ENCODE measurements at regions of chr11 and their contacts with region 1.

Region 1: DNA sequence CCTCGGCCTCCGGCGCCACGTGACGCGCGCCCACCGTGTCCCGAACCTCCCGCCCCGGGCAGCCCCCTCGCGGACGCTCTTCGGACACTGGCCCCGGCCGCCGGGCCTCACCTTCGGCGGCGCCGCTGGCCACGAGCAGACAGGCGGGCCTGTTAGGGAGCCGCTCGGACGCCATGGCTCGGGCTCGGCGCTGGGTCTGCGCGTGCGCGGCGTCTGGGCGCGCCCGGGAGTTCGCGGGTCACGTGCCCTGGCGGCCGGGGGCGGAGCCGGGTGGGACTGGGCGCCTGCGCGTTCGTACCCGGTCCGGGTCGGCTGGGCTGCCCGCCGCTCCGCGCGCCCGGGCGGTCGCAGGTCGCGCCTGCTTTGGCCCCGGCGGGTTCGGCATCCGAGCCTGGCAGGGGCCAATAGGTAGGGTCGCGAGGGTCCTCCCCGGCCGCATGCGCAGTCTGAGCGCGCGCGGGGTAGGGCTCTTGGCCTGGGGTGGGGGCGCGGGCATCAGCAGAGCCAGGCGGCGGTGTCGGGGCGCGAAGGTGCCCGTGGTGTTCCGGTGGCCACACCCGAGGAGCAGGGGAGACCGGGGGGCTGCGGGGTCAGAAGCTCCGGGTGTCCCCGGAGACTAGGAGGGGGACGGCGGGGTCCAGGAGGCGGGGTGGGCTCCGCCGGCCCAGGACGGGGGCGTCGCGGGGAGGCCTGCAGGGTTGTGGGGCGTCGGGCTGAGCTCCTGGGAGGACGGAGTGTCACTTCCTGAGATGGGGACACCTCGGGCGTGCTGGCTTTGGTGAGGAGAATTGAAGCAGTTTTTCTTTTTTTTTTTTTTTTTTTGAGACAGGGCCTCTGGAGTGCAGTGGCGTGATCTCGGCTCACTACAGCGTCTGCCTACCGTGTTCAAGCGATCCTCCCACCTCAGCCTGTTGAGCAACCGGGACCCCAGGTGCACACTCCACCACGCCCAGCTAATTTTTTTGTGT is at the start of gene GATD1:
- DNase-seq: peak; percentile 94
- H3K4me3 Mint-ChIP-seq: peak within 1 kb of the TSS; percentile 81
- H3K27ac Mint-ChIP-seq: peak within 1 kb of the TSS; percentile 79
- H3K4me1 Mint-ChIP-seq: peaks cover 35% of the 10 kb centered on the region
- H3K27me3 Mint-ChIP-seq: no peaks in the 10 kb centered on the region
- total RNA-seq, gene GATD1: 48.6 to 52.9 TPM

Region 2: GRCh38 chr11:747158-748006 is 30.2 kb before region 1 on chr11 and contains the start of gene TALDO1:
- CTCF ChIA-PET with region 1: no interaction called
- POLR2A ChIA-PET with region 1: interaction called, 14 read pairs
- DNase-seq: peak; percentile 89
- H3K4me3 Mint-ChIP-seq: peak within 1 kb of the TSS; percentile 82
- H3K27ac Mint-ChIP-seq: peak within 1 kb of the TSS; percentile 77
- H3K4me1 Mint-ChIP-seq: peaks cover 25% of the 10 kb centered on the region
- H3K27me3 Mint-ChIP-seq: no peaks in the 10 kb centered on the region
- total RNA-seq, gene TALDO1: 215 to 224 TPM

Region 3: DNA sequence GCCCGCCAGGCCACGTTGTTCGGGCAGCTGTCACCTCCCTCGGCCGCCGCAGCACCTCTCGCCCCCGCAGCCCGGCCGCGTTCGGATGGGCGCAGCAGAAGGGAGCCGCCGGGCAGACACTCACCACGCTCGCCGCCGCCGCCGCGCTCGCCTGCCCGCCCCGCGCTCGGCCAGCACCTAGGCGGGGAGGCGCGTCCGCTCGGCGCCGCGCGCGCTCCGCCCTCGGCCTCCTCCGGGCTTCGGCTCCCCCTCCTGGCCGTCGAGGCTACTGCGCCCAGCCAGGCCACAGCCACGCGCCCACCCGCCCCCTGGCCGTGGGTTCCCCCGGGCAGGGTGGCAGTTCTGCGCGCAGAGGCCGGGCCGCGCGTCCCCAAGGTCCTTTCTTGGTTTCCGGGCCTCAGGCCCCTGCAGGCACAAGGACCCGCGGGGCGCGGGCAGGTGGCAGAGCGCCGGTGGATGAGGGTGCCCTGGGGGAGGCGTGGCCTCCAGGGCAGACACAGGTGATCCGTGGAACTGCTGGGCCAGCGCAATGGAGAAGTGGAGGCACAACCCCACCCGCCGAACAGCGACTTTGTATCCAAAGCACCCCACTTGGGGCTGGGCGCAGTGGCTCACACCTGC is 20.6 kb after region 1 on chr11 and contains the start of gene SLC25A22:
- CTCF ChIA-PET with region 1: no interaction called
- POLR2A ChIA-PET with region 1: interaction called, 35 read pairs
- DNase-seq: peak; percentile 87
- H3K4me3 Mint-ChIP-seq: peak within 1 kb of the TSS; percentile 93
- H3K27ac Mint-ChIP-seq: peak within 1 kb of the TSS; percentile 89
- H3K4me1 Mint-ChIP-seq: peaks cover 37% of the 10 kb centered on the region
- H3K27me3 Mint-ChIP-seq: no peaks in the 10 kb centered on the region
- total RNA-seq, gene SLC25A22: 35.7 to 38.3 TPM

Region 4: GRCh38 chr11:803770-804598 is 26.4 kb after region 1 on chr11:
- CTCF ChIA-PET with region 1: interaction called, 4 read pairs
- POLR2A ChIA-PET with region 1: interaction called, 12 read pairs
- DNase-seq: no peak
- H3K4me3 Mint-ChIP-seq: peak overlapping the region; percentile 82
- H3K27ac Mint-ChIP-seq: peak overlapping the region; percentile 78
- H3K4me1 Mint-ChIP-seq: peaks cover 40% of the 10 kb centered on the region
- H3K27me3 Mint-ChIP-seq: no peaks in the 10 kb centered on the region

Region 5: DNA sequence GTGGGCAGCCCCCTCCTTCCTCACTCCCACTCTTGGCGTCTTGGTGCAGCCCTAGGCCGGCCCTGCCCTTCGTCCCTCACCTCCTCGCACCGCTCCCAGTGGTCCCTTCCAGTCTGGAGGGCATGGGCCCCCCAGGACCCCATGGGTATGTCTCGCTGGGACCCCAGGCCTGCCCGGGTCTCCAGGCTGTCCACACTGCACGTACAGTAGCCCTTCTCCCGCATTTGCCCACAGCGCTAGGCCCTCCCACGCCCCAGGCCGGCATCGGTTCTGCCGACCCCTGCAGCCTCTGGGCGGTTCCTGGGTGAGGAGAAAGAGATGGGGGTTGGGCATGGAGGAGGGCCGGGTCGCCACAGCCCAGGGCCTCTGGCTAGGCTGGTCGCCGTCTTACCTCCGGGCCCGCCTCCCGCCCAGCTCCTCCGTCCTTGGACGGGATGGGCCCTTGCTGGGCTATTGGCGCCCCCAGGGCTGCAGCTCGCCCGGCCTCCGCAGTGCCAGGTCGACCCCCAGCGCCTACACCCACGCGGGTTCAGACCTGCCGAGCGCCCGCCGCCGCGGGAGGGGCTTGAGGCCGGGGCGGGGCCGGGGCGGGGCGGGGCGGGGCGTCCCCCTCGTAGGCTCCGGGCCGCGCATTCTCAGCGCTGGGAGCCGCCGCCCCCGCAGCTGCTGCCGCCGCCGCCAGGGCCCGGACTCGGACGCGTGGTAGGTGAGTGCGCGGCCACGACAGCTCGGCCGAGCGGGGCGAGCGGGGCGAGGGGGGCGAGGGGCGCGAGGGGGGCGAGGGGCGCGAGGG is 54.9 kb after region 1 on chr11 and contains the start of gene CD151:
- CTCF ChIA-PET with region 1: no interaction called
- POLR2A ChIA-PET with region 1: no interaction called
- DNase-seq: peak; percentile 61
- H3K4me3 Mint-ChIP-seq: peak within 1 kb of the TSS; percentile 47
- H3K27ac Mint-ChIP-seq: no peak within 1 kb of the TSS
- H3K4me1 Mint-ChIP-seq: peaks cover 36% of the 10 kb centered on the region
- H3K27me3 Mint-ChIP-seq: peaks cover 37% of the 10 kb centered on the region
- total RNA-seq, gene CD151: 28.0 to 28.6 TPM

Region 6: DNA sequence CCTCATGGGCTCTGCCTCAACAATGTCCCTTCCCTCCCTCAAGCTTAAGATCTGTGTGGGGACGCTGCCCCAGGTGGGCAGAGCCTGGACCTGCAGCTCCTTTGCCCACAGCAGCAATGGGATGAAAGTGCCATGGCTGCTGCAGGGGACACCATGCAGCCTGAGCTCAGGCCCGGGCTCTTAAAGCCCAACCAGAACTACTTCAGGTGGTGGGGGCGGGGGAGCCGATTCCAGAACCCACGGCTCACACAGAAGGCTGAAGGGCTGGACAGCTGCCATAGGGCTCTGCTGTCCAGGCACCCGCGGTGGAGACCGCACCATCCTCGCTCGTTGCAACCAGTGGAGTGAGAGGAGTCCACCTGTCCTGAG is 120.6 kb after region 1 on chr11:
- CTCF ChIA-PET with region 1: no interaction called
- POLR2A ChIA-PET with region 1: no interaction called
- DNase-seq: no peak
- H3K4me3 Mint-ChIP-seq: no peak overlapping the region
- H3K27ac Mint-ChIP-seq: no peak overlapping the region
- H3K4me1 Mint-ChIP-seq: no peaks in the 10 kb centered on the region
- H3K27me3 Mint-ChIP-seq: no peaks in the 10 kb centered on the region

Measured in activated CD4-positive, alpha-beta memory T cell treated with anti-CD3 and anti-CD28 coated beads, Interleukin-2, amount 10 ng/mL, durations not matched to agents 7 days and 5 days (primary cell).